HEK293 (cell line): ENCODE measurements at regions of chr6 and their contacts with region 1.

Region 1: GRCh38 chr6:51959744-51960383 is 127.5 kb downstream of the PKHD1 start:
- H3K4me3 ChIP-seq: no peak overlapping the region
- H3K27ac ChIP-seq: no peak overlapping the region
- H3K4me1 ChIP-seq: no peaks in the 10 kb centered on the region
- CTCF ChIP-seq: peak; percentile 45

Region 2: DNA sequence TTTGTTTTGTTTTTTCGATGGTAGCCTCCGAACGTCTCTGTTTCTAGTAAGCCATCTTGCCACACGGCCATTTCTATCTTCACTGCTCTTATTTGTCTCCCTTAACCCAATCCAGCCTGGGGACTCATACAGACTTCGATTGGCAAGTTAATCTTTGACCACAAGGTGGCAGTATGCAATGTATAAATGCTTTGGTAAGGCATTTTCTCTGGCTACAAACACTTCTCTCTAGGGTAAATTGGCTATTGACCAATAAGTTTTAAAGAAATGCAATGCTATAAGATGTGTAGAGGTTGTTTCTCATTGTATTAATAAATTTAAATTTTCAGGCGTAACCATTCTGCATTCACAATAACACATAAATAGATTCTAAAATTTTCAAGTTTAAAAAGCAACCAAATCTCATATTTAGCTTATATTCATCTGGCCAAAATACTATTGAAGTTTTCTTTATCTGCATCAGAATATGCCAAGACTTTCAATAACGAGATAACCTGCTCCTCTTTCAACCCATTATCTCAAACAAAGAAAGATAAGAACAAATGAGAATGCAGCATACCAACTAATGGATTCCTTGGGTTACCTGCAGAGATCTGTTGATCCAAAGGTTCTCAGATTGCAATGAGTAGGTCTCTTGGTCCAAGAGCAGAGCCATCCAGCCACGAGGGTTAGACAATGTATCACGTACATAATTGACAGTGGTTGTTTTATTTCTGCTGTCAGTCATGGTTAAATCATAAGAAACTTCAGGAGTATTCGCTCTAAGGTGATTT is 104.4 kb before region 1 on chr6:
- CTCF ChIA-PET with region 1: interaction called, 14 read pairs
- POLR2A ChIA-PET with region 1: no interaction called
- H3K4me3 ChIP-seq: no peak overlapping the region
- H3K27ac ChIP-seq: no peak overlapping the region
- H3K4me1 ChIP-seq: no peaks in the 10 kb centered on the region
- CTCF ChIP-seq: no peak; the same call in 1 of the 2 replicates

Region 3: DNA sequence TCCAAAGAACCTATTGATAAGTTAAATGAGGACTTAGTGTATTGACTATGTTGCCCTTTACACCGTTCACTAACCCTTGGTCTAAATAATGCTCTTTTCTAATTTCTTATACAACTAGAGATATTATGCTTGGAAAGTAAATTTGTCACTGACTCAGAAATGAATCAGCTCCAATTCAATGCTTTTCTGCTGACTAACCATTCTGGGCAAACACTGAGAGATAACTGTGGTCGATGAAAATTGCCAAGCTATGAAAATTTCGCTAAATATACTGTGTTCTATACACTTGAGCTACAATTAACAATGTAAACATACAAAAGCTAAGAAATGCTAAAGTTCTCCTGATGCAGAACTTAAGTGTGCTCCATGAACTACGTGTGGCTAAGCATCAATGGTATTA is 1082.2 kb after region 1 on chr6:
- CTCF ChIA-PET with region 1: no interaction called
- POLR2A ChIA-PET with region 1: no interaction called
- H3K4me3 ChIP-seq: no peak overlapping the region
- H3K27ac ChIP-seq: no peak overlapping the region
- H3K4me1 ChIP-seq: peaks cover 2% of the 10 kb centered on the region; the same call in 1 of the 2 replicates
- CTCF ChIP-seq: no peak